ENCODE measurements at regions of chr6 and their contacts with region 1.

Region 1: GRCh38 chr6:43263314-43264178 is 20.3 kb downstream of the TTBK1 start:
- DNase-seq: peak; percentile 57 to 84 (median 75)
- ATAC-seq: peak; percentile 95
- H3K4me3 ChIP-seq: no peak overlapping the region
- H3K4me3 Mint-ChIP-seq: no peak overlapping the region
- H3K27ac ChIP-seq: no peak overlapping the region
- H3K27ac Mint-ChIP-seq: no peak overlapping the region
- H3K4me1 ChIP-seq: no peaks in the 10 kb centered on the region
- H3K4me1 Mint-ChIP-seq: no peaks in the 10 kb centered on the region
- H3K27me3 ChIP-seq: no peaks in the 10 kb centered on the region
- H3K27me3 Mint-ChIP-seq: peaks cover 3% of the 10 kb centered on the region
- CTCF ChIP-seq: peak; percentile 57

Region 2: DNA sequence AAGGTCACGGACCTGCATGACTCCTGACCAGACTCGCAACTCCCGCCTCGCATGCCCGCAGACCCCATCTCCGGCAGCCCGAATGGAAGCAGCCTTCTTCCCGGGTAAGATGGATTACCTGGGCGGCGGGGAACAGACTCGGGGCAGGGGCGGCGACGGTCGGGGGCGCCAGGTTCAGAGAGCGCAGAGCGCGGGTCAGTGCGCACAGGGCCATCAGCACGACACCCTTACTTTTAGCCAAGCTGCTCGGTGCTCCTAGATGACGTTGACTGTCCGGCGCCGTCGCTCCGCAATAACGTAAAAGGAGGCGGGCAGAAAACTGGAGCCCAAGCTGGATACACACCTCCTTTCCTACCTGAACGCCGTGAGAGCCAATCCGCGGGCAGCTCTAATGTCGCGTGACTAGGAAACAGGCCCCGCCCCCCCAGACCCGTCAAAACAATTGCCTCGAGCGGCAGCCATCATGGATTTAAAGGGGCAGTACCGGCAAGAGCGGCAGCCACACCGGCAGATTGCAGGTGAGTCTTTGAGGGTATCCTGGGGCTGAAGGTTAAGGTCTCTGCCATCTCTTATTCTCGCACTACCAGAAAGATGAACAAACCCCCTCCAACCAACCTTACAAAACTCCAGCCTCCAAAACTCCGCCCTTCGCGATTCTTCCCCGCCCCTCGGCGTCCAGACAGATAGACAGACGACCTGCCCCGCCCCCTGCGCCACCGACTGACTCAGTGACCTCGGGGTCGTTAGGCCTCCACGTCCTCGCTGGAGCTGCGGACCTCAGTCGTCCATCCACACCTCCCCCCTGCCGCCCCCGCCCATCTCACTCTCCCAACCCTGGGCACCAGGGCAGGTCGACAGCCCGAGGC is 204.1 kb before region 1 on chr6 and contains the starts of genes KLC4 and MRPL2:
- CTCF ChIA-PET with region 1: no interaction called
- POLR2A ChIA-PET with region 1: no interaction called
- intact Hi-C with region 1: no loop called
- DNase-seq: peak; percentile 94 to 99 (median 98)
- ATAC-seq: peak; percentile 97
- H3K4me3 ChIP-seq: peak within 1 kb of the TSS; percentile 81 to 96
- H3K4me3 Mint-ChIP-seq: peak within 1 kb of the TSS; percentile 95
- H3K27ac ChIP-seq: peak within 1 kb of the TSS; percentile 84 to 91
- H3K27ac Mint-ChIP-seq: peak within 1 kb of the TSS; percentile 99
- H3K4me1 ChIP-seq: peaks cover 19% of the 10 kb centered on the region
- H3K4me1 Mint-ChIP-seq: peaks cover 44% of the 10 kb centered on the region
- H3K27me3 ChIP-seq: no peaks in the 10 kb centered on the region
- H3K27me3 Mint-ChIP-seq: no peaks in the 10 kb centered on the region
- CTCF ChIP-seq: no peak
- total RNA-seq, gene KLC4: 42.1 to 57.4 TPM
- total RNA-seq, gene MRPL2: 38.9 to 41.6 TPM

Region 3: DNA sequence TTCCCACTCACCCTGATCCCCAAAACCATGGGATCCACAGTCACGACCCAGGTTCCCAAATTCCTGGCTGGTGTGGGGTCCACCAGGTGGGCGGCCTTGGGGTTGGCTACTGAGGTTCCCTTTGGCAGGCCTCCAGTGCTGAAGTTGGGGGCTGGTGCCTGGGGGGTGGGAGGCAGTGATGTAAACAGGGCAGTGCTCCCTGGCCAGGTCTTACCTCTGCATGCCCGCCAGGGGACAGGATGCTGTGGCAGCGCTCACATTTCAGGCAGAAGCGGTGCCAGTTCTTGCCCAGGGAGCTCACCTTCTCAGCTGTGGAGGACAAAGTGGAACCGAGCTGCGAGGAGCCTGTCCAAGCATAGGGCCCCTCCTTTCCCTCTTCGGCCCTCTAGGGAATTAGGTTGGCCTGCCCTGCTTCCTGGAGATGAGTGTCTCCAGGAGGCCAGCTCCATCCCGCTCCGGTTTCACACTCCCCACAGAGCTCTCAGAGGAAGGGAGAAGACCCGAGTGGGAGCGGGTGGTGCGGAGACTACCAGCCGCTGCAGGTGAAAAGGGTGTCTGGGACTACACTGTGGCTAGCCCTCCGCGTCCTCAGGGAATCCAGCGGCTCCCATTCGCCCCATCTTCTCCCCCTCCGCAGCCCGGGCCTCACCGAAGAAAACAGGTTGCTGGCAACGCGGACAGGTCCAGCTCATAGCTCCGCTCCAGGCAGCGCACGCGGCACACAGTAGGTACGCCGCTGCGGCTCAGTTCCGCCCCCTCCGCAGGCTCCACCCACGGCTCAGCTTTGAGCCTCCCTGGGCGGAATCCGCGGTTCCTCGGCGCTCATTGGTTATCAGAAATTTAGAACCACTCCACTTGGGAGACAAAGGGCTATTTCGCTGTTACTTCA is 44.8 kb after region 1 on chr6 and contains the start of gene CRIP3:
- CTCF ChIA-PET with region 1: no interaction called
- POLR2A ChIA-PET with region 1: no interaction called
- intact Hi-C with region 1: loop called in 1 of 2 experiments (anchors 2 kb)
- DNase-seq: peak in 8 of 9 experiments; percentile 21 to 68 (median 50)
- ATAC-seq: peak; percentile 86
- H3K4me3 ChIP-seq: peak within 1 kb of the TSS; percentile 36 to 48
- H3K4me3 Mint-ChIP-seq: peak within 1 kb of the TSS; percentile 77
- H3K27ac ChIP-seq: no peak within 1 kb of the TSS
- H3K27ac Mint-ChIP-seq: no peak within 1 kb of the TSS
- H3K4me1 ChIP-seq: peaks cover 12% of the 10 kb centered on the region
- H3K4me1 Mint-ChIP-seq: peaks cover 9% of the 10 kb centered on the region
- H3K27me3 ChIP-seq: no peaks in the 10 kb centered on the region
- H3K27me3 Mint-ChIP-seq: peaks cover 5% of the 10 kb centered on the region
- CTCF ChIP-seq: peak; percentile 41
- total RNA-seq, gene CRIP3: 0.64 to 0.84 TPM

Region 4: GRCh38 chr6:43334466-43335095 is 71.0 kb after region 1 on chr6:
- CTCF ChIA-PET with region 1: interaction called, 3 read pairs
- POLR2A ChIA-PET with region 1: no interaction called
- intact Hi-C with region 1: loop called (anchors 2 to 5 kb)
- DNase-seq: peak in 2 of 9 experiments; percentile 21 to 46
- ATAC-seq: no peak
- H3K4me3 ChIP-seq: no peak overlapping the region
- H3K4me3 Mint-ChIP-seq: no peak overlapping the region
- H3K27ac ChIP-seq: no peak overlapping the region
- H3K27ac Mint-ChIP-seq: no peak overlapping the region
- H3K4me1 ChIP-seq: peaks cover 14% of the 10 kb centered on the region
- H3K4me1 Mint-ChIP-seq: peaks cover 16% of the 10 kb centered on the region
- H3K27me3 ChIP-seq: no peaks in the 10 kb centered on the region
- H3K27me3 Mint-ChIP-seq: no peaks in the 10 kb centered on the region
- CTCF ChIP-seq: peak; percentile 36

Measured in CD8-positive, alpha-beta T cell (primary cell).